Dorsolateral prefrontal cortex (tissue), 120 donors: ENCODE measurements at regions of chr1 and their contacts with region 1.

Region 1: GRCh38 chr1:204363335-204364124 is 3.8 kb upstream of the PLEKHA6 start:
- DNase-seq: peak in 6 of 10 donors; percentile 61 to 78 (median 69)
- H3K4me3 ChIP-seq: peak overlapping the region; percentile 29 to 73 (median 56)
- H3K27ac ChIP-seq: peak overlapping the region in 57 of 59 donors; percentile 9 to 94 (median 79)
- H3K27me3 ChIP-seq: no peaks in the 10 kb centered on the region
- CTCF ChIP-seq: peak; percentile 94 to 100 (median 98)

Region 2: DNA sequence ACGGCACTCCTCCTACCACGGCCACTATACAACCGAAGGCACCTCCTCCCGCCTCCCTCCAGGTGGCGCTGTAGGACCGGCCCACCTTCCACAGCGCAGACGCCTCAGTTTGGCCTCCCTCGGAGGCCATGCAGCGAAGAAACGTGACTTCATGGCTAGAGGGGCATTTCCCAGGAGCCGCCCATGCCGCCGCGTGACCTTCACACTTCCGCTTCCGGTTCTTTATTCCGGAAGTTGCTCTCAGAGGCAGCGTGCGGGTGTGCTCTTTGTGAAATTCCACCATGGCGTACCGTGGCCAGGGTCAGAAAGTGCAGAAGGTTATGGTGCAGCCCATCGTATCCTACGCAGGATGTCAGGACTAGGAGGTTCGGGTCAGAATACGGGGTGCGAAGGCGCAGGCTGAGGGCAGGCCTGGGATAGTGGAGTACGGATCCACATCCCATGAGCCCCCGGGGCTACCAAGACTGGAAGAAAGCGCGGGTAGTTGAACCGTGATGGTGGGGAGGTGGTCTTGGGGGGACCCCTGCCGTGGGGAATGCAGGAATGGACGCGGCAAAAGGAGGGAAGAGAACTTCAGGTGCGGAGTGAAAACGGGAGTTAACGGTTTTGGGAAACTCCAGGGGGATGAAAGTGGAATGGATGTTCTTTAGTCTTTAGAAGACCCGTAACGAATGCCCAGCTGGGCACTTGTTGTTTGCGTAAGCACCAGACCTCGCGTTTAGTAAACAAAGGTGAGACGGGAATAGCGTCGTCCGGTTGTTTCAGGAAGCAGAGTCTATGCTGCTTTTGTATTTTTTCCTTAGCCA is 501.9 kb before region 1 on chr1 and contains the start of gene SNRPE:
- intact Hi-C with region 1: loop called (anchors 5 kb)
- DNase-seq: peak; percentile 91 to 96 (median 94)
- H3K4me3 ChIP-seq: peak within 1 kb of the TSS; percentile 66 to 100 (median 90)
- H3K27ac ChIP-seq: peak within 1 kb of the TSS in 45 of 59 donors; percentile 9 to 87 (median 61)
- H3K27me3 ChIP-seq: no peaks in the 10 kb centered on the region
- CTCF ChIP-seq: peak; percentile 88 to 99 (median 97)
- total RNA-seq, gene SNRPE: 20.4 to 71.0 (median 43.4) TPM

Region 3: DNA sequence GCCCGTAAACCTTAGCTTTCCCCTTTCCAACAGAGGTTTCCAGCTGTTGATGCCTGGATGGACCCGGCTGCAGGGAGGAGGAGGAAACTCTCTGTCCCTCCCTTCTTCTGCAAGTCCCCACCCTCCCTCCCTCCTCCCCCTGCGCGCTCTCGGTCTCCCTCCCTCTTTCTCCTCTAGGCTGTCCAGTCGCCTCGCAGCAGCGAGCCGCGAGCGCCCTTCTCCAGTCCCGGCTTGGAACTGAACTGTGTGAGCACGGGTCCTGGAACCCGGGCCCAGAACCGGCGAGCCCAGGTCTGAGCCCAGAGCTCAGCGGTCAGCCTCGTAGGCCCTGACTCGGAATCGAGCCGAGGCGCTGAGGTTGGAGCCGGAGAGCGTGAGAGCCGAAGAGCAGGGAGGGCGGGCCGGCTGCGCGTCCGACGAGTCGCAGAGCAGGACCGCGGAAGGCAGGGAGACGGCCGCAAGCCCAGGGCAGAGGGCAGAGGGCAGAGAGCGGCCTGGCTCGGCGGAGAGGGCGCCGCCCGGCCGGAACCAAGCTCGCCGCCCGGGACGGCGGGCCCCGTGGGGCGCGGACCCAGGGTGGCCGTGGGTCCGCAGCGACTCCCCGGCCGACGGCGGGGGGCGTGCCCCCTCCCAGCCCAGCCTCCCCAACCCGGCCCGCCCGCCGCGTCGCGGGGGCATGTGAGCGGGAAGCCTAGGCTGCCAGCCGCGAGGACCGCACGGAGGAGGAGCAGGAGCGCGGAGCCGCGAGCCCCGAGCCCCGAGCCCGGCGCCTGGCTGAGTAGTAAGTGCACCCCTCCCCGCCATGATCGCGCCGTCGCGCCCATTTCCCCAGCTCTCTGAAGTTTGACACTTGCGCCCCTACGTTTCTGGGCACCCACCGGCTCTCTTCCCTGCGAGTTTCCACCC is 290.3 kb before region 1 on chr1 and contains the start of gene SOX13:
- intact Hi-C with region 1: loop called in 1 of 2 experiments (anchors 10 kb)
- DNase-seq: peak; percentile 74 to 90 (median 86)
- H3K4me3 ChIP-seq: peak within 1 kb of the TSS; percentile 60 to 95 (median 76)
- H3K27ac ChIP-seq: peak within 1 kb of the TSS in 58 of 59 donors; percentile 34 to 92 (median 84)
- H3K27me3 ChIP-seq: no peaks in the 10 kb centered on the region
- CTCF ChIP-seq: peak in 38 of 56 donors; percentile 4 to 55 (median 32)
- total RNA-seq, gene SOX13: 13.7 to 62.1 (median 24.8) TPM

Region 4: GRCh38 chr1:204213668-204214662 is 149.6 kb before region 1 on chr1 and contains the start of gene GOLT1A:
- intact Hi-C with region 1: loop called (anchors 2 kb)
- DNase-seq: peak; percentile 40 to 84 (median 74)
- H3K4me3 ChIP-seq: peak within 1 kb of the TSS in 58 of 59 donors; percentile 4 to 64 (median 40)
- H3K27ac ChIP-seq: peak within 1 kb of the TSS in 2 of 59 donors; percentile 8 to 48
- H3K27me3 ChIP-seq: no peaks in the 10 kb centered on the region
- CTCF ChIP-seq: peak; percentile 37 to 88 (median 76)
- total RNA-seq, gene GOLT1A: 0.56 to 7.7 (median 1.9) TPM in 113 of 120 experiments, not detected in the others

Region 5: DNA sequence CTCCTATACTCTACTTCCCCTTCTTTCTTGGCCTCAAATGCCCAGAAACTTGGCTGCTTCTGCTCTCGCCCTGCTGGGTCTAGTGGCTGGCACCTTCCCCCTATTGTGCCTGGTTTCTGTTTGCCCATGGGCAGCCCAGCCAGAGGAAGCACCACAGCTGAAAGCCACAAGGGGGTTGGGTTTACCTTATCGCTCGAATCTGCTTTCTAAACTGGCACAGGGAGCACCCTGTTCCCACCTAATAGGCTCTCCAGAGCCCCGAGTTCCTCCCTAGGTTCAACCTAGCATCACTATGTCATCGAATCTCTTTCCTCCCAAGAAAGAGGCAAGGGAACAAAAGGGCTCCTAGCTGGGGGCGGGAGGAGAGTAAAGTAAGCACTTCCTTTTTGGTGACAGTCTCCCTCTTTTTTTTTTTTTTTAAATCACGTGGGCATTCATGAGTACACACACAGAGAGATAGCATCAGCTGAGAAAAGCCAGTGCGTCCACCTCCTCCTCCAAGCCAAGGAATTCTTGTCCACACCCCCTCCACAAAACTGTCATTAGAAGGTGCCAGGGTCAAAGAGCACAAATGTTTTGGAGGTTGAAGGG is 76.6 kb before region 1 on chr1:
- intact Hi-C with region 1: loop called in 1 of 2 experiments (anchors 5 kb)
- DNase-seq: peak in 1 of 10 donors; percentile 54
- H3K4me3 ChIP-seq: peak overlapping the region in 29 of 59 donors; percentile 1 to 41 (median 21)
- H3K27ac ChIP-seq: peak overlapping the region in 51 of 59 donors; percentile 5 to 83 (median 59)
- H3K27me3 ChIP-seq: no peaks in the 10 kb centered on the region
- CTCF ChIP-seq: peak in 5 of 56 donors; percentile 2 to 23 (median 14)

Region 6: DNA sequence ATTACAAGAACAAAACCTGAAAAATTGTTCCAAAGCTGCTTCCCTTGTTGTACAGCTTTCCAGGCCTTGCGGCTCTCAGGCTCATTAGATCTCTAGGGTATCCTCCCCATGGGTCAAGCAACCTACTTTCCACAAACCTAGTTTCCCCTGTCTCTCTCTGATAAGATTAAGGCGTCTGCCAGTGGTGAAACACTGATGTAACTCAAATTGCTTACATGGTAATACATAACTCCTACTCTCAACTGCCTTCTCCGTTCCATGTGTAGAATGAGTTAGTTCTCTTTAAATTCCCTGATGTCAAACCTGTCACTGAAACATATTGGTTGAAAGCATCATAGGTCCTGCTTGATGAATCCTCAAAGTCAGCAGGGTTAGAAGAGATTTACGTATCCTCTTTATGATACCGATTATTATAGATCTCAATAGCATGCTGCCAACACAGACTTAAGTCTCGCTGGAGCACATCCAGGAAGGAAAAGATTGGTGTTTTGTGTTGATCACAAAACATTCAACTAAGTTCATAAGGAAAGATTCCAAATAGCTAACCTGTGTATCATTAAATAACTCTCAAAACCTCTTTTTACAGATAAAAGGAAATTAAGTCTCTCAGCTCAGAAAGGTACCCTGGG is 37.5 kb after region 1 on chr1:
- intact Hi-C with region 1: loop called in 1 of 2 experiments (anchors 5 kb)
- DNase-seq: no peak
- H3K4me3 ChIP-seq: no peak overlapping the region
- H3K27ac ChIP-seq: peak overlapping the region in 5 of 59 donors; percentile 1 to 22 (median 15)
- H3K27me3 ChIP-seq: no peaks in the 10 kb centered on the region
- CTCF ChIP-seq: no peak

Region 7: DNA sequence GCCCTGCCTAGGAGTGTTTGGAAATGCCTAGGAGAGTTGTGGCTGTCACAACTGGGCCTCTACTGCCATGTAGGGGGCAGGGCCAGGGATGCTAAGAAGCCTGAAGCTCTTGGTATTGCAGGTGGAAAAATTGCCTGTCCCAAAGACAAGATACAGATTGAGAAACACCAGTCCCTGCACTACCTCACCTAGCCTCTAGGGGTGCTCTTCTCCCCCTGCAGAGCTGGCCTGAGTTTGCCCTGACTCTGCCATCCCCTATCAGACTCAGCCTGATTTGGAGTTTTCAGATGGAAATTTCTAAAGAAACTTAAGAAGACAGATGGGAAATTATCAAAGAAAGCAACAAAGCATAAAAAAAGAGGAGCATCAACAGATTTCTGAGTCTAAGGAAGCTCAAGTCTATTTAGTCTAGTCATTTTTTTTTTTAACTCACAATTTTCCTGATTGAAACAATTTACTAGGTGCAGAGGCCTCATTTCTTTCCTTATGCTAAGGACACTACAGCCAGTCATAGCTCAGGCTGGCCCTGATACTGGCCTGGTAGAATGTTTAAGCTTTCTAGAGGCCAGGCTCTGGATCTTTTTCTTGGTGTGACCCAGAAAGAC is 383.4 kb after region 1 on chr1:
- intact Hi-C with region 1: no loop called
- DNase-seq: no peak
- H3K4me3 ChIP-seq: no peak overlapping the region
- H3K27ac ChIP-seq: no peak overlapping the region
- H3K27me3 ChIP-seq: peaks cover 0 to 5% (median 0%) of the 10 kb centered on the region in 45 donors
- CTCF ChIP-seq: peak; percentile 52 to 89 (median 79)